CD14-positive monocyte (primary cell): ENCODE measurements at regions of chr9 and their contacts with region 1.

Region 1: DNA sequence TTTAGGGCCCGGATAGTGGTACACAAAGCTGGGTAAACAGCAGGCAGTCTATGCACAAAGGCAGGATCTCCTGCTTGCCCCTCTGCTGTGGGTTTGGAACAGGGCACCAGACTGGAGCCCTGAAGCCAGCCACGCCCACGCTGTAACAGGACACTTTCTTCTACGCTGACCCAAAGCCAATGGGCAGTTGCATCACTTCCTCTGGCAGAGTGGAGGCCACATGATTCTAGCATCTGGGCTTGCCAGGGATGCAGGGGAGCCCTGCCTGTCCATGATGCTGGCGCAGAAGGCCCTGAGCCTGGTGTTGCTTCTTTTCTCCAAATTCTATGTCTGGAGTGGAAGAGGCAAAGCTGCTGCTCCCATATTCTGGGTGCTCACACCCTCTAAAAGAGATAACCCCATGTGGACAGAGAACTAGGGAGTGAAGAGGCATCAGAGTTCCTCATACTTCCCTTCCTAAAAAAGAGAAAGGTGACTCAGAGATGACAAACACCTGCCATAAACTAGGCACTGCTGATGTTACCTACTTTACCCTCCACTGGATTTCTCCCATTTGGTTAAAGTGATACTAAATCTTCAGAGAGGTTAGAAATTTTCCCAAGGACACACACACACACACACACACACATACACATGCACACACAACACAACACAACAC is 260.3 kb upstream of the KLF4 start:
- DNase-seq: peak; percentile 84 to 90 (median 89)
- H3K4me3 ChIP-seq: peak overlapping the region in 1 of 3 experiments; percentile 27
- H3K4me3 Mint-ChIP-seq: peak overlapping the region in 1 of 2 donors; percentile 60
- H3K27ac ChIP-seq: peak overlapping the region; percentile 86 to 98
- H3K27ac Mint-ChIP-seq: peak overlapping the region; percentile 92 to 99 (median 97)
- H3K4me1 ChIP-seq: peaks cover 64 to 68% of the 10 kb centered on the region in 2 donors
- H3K4me1 Mint-ChIP-seq: peaks cover 79% of the 10 kb centered on the region
- H3K27me3 ChIP-seq: no peaks in the 10 kb centered on the region
- H3K27me3 Mint-ChIP-seq: peaks cover 0 to 2% (median 0%) of the 10 kb centered on the region in 3 donors
- CTCF ChIP-seq: no peak

Region 2: GRCh38 chr9:107637421-107638420 is 112.2 kb before region 1 on chr9:
- intact Hi-C with region 1: loop called in 1 of 2 experiments (anchors 5 kb)
- DNase-seq: peak; percentile 92 to 97 (median 93)
- H3K4me3 ChIP-seq: peak overlapping the region; percentile 47 to 74 (median 70)
- H3K4me3 Mint-ChIP-seq: peak overlapping the region; percentile 81 to 92
- H3K27ac ChIP-seq: peak overlapping the region; percentile 98 to 99
- H3K27ac Mint-ChIP-seq: peak overlapping the region; percentile 97 to 98 (median 98)
- H3K4me1 ChIP-seq: peaks cover 35 to 41% of the 10 kb centered on the region in 2 donors
- H3K4me1 Mint-ChIP-seq: peaks cover 45% of the 10 kb centered on the region
- H3K27me3 ChIP-seq: no peaks in the 10 kb centered on the region
- H3K27me3 Mint-ChIP-seq: peaks cover 0 to 3% (median 0%) of the 10 kb centered on the region in 3 donors
- CTCF ChIP-seq: no peak

Region 3: DNA sequence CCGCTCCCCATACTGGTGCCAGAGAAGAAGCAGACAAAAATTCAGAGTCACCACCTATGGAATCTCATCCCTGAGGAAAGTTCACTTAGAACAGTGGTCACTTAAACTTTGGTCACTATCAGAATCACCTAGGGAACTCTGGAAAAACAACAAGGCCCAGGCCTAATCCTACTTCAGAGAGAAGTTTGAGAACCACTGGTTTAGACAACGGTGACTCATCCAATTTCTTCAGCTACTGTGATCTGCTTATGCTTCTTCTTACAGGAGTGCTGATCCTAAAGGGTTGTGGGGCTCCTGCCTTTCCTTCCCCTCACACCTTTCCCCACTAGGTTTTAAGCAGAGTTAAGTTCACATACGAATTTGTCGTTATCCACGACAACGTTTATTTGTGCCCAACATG is 65.7 kb before region 1 on chr9:
- intact Hi-C with region 1: loop called in 1 of 2 experiments (anchors 10 kb)
- DNase-seq: peak in 2 of 3 donors; percentile 70 to 72
- H3K4me3 ChIP-seq: peak overlapping the region in 1 of 3 experiments; percentile 9
- H3K4me3 Mint-ChIP-seq: no peak overlapping the region
- H3K27ac ChIP-seq: peak overlapping the region; percentile 81 to 85
- H3K27ac Mint-ChIP-seq: peak overlapping the region; percentile 85 to 95 (median 92)
- H3K4me1 ChIP-seq: peaks cover 32 to 39% of the 10 kb centered on the region in 2 donors
- H3K4me1 Mint-ChIP-seq: peaks cover 34% of the 10 kb centered on the region
- H3K27me3 ChIP-seq: no peaks in the 10 kb centered on the region
- H3K27me3 Mint-ChIP-seq: peaks cover 0 to 2% (median 0%) of the 10 kb centered on the region in 3 donors
- CTCF ChIP-seq: no peak

Region 4: DNA sequence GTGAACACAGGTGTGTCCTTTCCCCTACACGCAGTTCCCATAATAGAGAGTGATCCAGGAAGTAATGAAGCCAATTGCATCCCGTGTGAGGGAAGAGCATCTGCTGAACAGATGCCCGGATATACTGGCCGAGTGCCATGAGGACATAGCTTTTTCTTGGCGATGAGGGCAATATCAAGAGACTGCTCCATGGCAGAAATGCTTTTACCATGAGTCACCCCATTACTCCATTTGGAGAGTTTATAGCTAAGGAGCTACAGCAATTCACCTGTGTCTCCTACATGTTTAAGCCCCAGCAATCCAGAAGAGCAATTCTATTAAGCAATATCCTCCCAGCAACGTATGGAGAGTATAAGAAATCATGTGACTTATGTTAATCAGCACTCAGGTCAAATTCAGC is 38.4 kb before region 1 on chr9:
- intact Hi-C with region 1: loop called in 1 of 2 experiments (anchors 5 kb)
- DNase-seq: peak in 2 of 3 donors; percentile 44 to 49
- H3K4me3 ChIP-seq: peak overlapping the region in 1 of 3 experiments; percentile 7
- H3K4me3 Mint-ChIP-seq: peak overlapping the region in 1 of 2 donors; percentile 4
- H3K27ac ChIP-seq: no peak overlapping the region
- H3K27ac Mint-ChIP-seq: peak overlapping the region in 4 of 7 donors; percentile 13 to 67 (median 40)
- H3K4me1 ChIP-seq: peaks cover 37 to 48% of the 10 kb centered on the region in 2 donors
- H3K4me1 Mint-ChIP-seq: peaks cover 52% of the 10 kb centered on the region
- H3K27me3 ChIP-seq: no peaks in the 10 kb centered on the region
- H3K27me3 Mint-ChIP-seq: peaks cover 0 to 2% (median 0%) of the 10 kb centered on the region in 3 donors
- CTCF ChIP-seq: no peak

Region 5: GRCh38 chr9:107847978-107848964 is 98.4 kb after region 1 on chr9:
- intact Hi-C with region 1: no loop called
- DNase-seq: peak; percentile 46 to 85 (median 59)
- H3K4me3 ChIP-seq: peak overlapping the region; percentile 13 to 61 (median 36)
- H3K4me3 Mint-ChIP-seq: peak overlapping the region; percentile 40 to 76
- H3K27ac ChIP-seq: peak overlapping the region; percentile 88 to 93
- H3K27ac Mint-ChIP-seq: peak overlapping the region; percentile 84 to 97 (median 94)
- H3K4me1 ChIP-seq: peaks cover 45 to 66% of the 10 kb centered on the region in 2 donors
- H3K4me1 Mint-ChIP-seq: peaks cover 60% of the 10 kb centered on the region
- H3K27me3 ChIP-seq: no peaks in the 10 kb centered on the region
- H3K27me3 Mint-ChIP-seq: peaks cover 0 to 1% (median 0%) of the 10 kb centered on the region in 3 donors
- CTCF ChIP-seq: no peak

Region 6: DNA sequence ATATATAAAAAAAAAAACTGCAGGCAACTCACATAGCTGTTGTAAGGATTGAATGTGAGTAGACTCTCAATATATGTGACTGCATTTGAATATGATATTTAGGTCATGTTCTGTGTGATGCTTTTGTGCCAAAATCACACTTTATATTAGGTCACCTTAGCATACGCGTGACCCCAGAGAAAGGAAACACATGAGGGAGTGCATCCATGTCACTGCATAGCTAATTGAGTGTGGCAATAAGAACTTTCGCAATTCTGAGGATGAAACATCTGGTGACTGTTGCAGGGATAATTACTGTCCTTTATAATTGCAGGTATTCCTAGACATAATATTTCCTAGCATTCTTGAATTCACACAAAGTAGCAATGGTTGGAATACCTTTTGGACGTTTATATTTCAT is 199.1 kb after region 1 on chr9:
- intact Hi-C with region 1: loop called in 1 of 2 experiments (anchors 5 kb)
- DNase-seq: peak; percentile 76 to 94 (median 94)
- H3K4me3 ChIP-seq: no peak overlapping the region
- H3K4me3 Mint-ChIP-seq: no peak overlapping the region
- H3K27ac ChIP-seq: peak overlapping the region; percentile 0 to 68
- H3K27ac Mint-ChIP-seq: peak overlapping the region; percentile 85 to 98 (median 91)
- H3K4me1 ChIP-seq: peaks cover 43 to 45% of the 10 kb centered on the region in 2 donors
- H3K4me1 Mint-ChIP-seq: peaks cover 48% of the 10 kb centered on the region
- H3K27me3 ChIP-seq: no peaks in the 10 kb centered on the region
- H3K27me3 Mint-ChIP-seq: peaks cover 0 to 2% (median 0%) of the 10 kb centered on the region in 3 donors
- CTCF ChIP-seq: no peak